ENCODE measurements at regions of chr12 and their contacts with region 1.

Region 1: DNA sequence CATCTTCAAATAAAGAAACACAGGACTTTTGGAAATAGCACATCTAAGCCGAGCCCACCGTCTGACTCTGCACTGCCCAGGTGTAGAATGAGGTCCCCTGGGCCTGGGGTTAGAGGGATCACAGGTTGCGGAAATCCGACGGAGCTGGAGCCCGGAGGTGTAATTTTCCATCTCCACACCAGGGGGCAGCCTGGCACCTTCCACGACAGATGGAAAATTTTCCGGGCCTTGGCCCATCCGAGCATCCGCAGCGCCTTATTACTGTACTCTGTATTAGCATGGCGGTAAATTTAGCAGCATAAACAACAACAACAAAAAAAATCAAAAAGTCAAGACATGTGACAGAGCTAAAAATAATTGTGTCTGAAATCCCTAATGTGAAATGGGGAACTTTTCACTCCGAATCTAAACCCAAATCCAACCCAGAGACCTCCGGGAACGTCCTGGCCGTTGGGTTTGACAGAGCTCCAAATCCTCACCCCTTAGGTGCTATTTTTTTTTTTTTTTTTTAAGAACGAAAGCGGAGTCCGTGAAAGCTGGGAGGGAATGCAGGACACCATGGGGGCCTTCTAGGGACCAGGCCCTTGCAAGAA is 93.9 kb downstream of the KSR2 start:
- DNase-seq: peak; percentile 73
- H3K4me3 ChIP-seq: no peak overlapping the region
- H3K27ac ChIP-seq: no peak overlapping the region
- H3K4me1 ChIP-seq: no peaks in the 10 kb centered on the region
- H3K27me3 ChIP-seq: peaks cover 24% of the 10 kb centered on the region
- CTCF ChIP-seq: peak; percentile 87

Region 2: DNA sequence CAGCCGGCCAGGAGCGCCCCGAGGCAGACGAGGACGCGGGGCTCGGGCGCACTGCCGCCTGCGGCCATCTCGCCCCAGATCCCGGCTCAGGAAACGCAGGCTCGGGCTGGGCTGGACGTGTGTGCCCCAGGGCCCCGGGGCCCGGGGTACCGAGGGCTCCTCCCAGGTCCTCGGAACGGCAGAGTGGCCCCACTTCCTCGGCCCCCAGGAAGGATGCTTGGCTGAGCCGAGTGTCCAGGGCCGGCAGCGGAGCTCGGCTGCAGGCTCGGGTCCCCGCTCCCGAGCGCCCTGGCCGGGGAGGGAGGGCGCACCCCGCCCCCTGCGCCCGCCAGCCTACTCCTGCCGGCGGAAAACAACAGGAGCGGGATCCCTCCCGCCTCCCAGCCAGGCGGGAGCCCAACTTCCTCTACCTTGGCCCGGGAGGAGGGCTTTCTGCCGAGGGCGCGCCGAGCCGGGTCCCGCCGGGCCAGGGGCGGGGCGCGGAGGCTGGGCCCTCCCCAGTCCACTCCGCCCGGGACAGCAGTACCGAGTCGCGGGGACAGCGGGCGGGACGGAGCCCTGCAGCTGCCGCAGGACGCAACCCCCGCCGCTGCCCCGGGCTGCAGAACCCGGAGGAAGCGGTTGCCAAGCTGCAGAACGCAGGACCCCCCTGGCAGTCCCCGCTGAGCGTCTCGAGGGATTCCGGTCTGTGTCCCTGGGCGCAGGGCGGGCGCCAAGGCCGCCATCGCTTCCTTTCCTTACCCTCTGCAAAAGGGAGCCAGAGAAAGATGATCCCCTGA is 228.9 kb after region 1 on chr12 and contains the start of gene VSIG10:
- CTCF ChIA-PET with region 1: no interaction called
- POLR2A ChIA-PET with region 1: no interaction called
- intact Hi-C with region 1: loop called (anchors 10 kb)
- DNase-seq: peak; percentile 51
- H3K4me3 ChIP-seq: peak within 1 kb of the TSS; percentile 77
- H3K27ac ChIP-seq: peak within 1 kb of the TSS; percentile 37
- H3K4me1 ChIP-seq: no peaks in the 10 kb centered on the region
- H3K27me3 ChIP-seq: no peaks in the 10 kb centered on the region
- CTCF ChIP-seq: no peak
- total RNA-seq, gene VSIG10: 7.7 and 9.9 TPM in 2 replicates

Measured in A673 (cell line).